MCF 10A (cell line): ENCODE measurements at regions of chr12 and their contacts with region 1.

Region 1: GRCh38 chr12:53159195-53159839 is 21.2 kb upstream of the ZNF740 start:
- DNase-seq: peak; percentile 85
- H3K4me3 Mint-ChIP-seq: no peak overlapping the region
- H3K27ac Mint-ChIP-seq: no peak overlapping the region
- H3K4me1 Mint-ChIP-seq: peaks cover 8% of the 10 kb centered on the region
- H3K27me3 Mint-ChIP-seq: no peaks in the 10 kb centered on the region
- CTCF ChIP-seq: peak; percentile 94

Region 2: GRCh38 chr12:52634266-52635056 is 524.9 kb before region 1 on chr12:
- CTCF ChIA-PET with region 1: no interaction called
- POLR2A ChIA-PET with region 1: no interaction called
- intact Hi-C with region 1: no loop called
- DNase-seq: peak; percentile 44
- H3K4me3 Mint-ChIP-seq: no peak overlapping the region
- H3K27ac Mint-ChIP-seq: no peak overlapping the region
- H3K4me1 Mint-ChIP-seq: peaks cover 5% of the 10 kb centered on the region
- H3K27me3 Mint-ChIP-seq: peaks cover 56% of the 10 kb centered on the region
- CTCF ChIP-seq: no peak

Region 3: DNA sequence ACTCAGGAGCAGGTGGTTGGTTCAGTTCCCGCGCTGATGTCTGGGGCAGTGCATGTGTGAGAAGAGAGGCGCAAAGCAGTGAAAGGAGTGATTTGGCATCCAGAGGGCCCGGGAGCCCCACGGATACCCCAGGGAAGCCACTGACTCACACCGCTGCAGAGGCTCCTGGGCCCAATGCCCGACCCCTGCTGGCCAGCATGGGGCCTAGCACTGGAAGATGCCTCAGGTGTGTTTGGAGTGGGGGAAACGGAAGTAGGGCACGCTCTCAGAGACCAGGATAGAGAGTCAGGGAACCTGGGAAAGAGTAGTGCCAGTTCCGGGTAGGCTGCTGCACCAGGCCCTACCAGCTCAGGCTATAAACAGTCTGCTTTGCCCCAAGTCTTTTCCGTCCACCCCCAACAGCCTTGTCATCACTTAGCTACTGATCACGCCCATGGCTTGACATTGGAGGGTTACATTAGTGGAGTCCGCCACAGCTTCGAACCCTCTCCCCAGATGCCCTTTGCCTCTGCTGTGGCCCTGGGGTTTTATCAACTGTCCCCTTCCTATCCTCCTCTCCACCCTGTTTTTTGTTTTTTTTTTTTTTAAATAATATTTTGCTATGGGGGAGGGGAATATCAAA is 30.9 kb after region 1 on chr12:
- CTCF ChIA-PET with region 1: interaction called, 4 read pairs
- POLR2A ChIA-PET with region 1: interaction called, 4 read pairs
- intact Hi-C with region 1: loop called (anchors 1 kb)
- DNase-seq: peak; percentile 68
- H3K4me3 Mint-ChIP-seq: no peak overlapping the region
- H3K27ac Mint-ChIP-seq: no peak overlapping the region
- H3K4me1 Mint-ChIP-seq: peaks cover 2% of the 10 kb centered on the region
- H3K27me3 Mint-ChIP-seq: no peaks in the 10 kb centered on the region
- CTCF ChIP-seq: peak; percentile 72

Region 4: DNA sequence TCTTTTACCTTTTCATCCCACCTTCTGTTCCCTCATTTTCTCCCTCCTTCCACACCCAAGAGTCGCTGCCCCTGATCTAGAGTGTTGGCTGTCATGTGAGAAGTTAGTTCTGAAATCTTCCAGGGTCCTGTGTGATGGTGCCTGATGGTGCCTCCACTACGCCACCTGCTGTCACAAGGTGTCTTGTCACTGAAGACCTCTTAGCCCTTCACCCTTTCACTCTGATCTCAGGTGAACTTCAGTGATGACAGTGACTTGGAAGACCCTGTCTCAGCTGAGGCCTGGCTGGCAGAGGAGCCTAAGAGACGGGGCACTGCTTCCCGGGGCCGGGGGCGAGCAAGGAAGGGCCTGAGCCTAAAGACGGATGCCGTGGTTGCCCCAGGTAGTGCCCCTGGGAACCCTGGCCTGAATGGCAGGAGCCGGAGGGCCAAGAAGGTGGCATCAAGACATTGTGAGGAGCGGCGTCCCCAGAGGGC is 128.5 kb after region 1 on chr12:
- CTCF ChIA-PET with region 1: interaction called, 54 read pairs
- POLR2A ChIA-PET with region 1: interaction called, 3 read pairs
- intact Hi-C with region 1: loop called (anchors 1 kb)
- DNase-seq: peak; percentile 61
- H3K4me3 Mint-ChIP-seq: no peak overlapping the region
- H3K27ac Mint-ChIP-seq: peak overlapping the region; percentile 24
- H3K4me1 Mint-ChIP-seq: peaks cover 6% of the 10 kb centered on the region
- H3K27me3 Mint-ChIP-seq: no peaks in the 10 kb centered on the region
- CTCF ChIP-seq: peak; percentile 74